ENCODE measurements at regions of chr6 and their contacts with region 1.

Region 1: GRCh38 chr6:42845327-42845694 is 34.1 kb upstream of the RPL7L1 start:
- DNase-seq: no peak
- ATAC-seq: no peak
- H3K4me3 ChIP-seq: no peak overlapping the region
- H3K4me3 Mint-ChIP-seq: no peak overlapping the region
- H3K27ac ChIP-seq: no peak overlapping the region
- H3K27ac Mint-ChIP-seq: no peak overlapping the region
- H3K4me1 ChIP-seq: peaks cover 0 to 3% of the 10 kb centered on the region in 2 experiments
- H3K4me1 Mint-ChIP-seq: peaks cover 11 to 17% (median 12%) of the 10 kb centered on the region in 3 donors
- H3K27me3 ChIP-seq: no peaks in the 10 kb centered on the region
- H3K27me3 Mint-ChIP-seq: no peaks in the 10 kb centered on the region

Region 2: DNA sequence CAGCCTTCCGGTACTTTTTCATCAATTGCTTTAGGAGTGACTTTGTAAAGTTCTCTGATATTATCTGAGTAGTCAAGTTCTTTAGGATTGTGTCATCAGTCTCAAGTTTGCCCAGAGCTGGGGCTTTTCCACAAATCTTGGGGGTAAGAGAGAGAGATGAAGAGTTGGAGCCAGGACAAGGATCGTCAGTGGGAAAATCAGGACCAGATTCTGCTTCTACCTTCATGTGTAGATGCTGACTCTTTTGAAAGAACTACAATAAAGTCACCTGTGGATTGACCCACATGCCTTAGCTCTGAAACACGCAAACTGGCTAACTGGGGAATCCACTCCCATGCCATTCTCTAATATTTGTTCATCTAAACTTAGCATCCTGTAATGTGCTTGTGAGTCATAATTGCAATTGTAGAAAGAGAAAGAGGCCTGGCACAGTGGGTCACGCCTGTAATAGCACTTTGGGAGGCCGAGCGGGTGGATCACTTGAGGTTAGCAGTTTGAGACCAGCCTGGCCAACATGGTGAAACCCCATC is 79.1 kb before region 1 on chr6:
- CTCF ChIA-PET with region 1: no interaction called
- POLR2A ChIA-PET with region 1: interaction called in 1 of 2 experiments, 10 read pairs
- DNase-seq: no peak
- ATAC-seq: no peak
- H3K4me3 ChIP-seq: no peak overlapping the region
- H3K4me3 Mint-ChIP-seq: no peak overlapping the region
- H3K27ac ChIP-seq: no peak overlapping the region
- H3K27ac Mint-ChIP-seq: peak overlapping the region in 1 of 2 donors; percentile 18
- H3K4me1 ChIP-seq: peaks cover 10 to 29% of the 10 kb centered on the region in 2 experiments
- H3K4me1 Mint-ChIP-seq: peaks cover 28 to 56% (median 44%) of the 10 kb centered on the region in 3 donors
- H3K27me3 ChIP-seq: no peaks in the 10 kb centered on the region
- H3K27me3 Mint-ChIP-seq: no peaks in the 10 kb centered on the region